AG04450 (cell line): ENCODE measurements at regions of chr5 and their contacts with region 1.

Region 1: GRCh38 chr5:17276445-17276844 is 59.0 kb downstream of the BASP1 start:
- DNase-seq: no peak
- H3K4me3 ChIP-seq: no peak overlapping the region
- H3K27ac ChIP-seq: no peak overlapping the region
- H3K27me3 ChIP-seq: no peaks in the 10 kb centered on the region
- CTCF ChIP-seq: no peak

Region 2: DNA sequence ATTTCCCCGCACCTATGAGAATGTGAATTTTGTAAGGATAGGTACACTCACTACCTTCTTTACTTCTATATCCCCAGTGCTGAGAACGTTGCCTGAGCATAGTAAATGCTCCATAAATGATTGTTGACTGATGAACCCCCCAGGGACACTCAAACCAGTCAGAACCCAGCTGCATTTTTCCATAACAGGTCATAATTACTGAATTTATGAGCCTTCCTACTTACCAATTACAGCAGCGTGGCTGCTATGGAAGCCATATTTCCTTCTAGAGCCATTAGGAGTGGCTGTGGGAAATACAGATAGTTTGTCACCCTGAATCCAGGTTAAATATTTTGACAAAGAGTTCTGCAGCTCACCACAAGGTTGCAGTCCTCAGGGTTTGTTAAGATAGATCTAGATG is 492.8 kb after region 1 on chr5:
- CTCF ChIA-PET with region 1: interaction called, 10 read pairs
- POLR2A ChIA-PET with region 1: no interaction called
- DNase-seq: no peak
- H3K4me3 ChIP-seq: no peak overlapping the region
- H3K27ac ChIP-seq: no peak overlapping the region
- H3K27me3 ChIP-seq: no peaks in the 10 kb centered on the region
- CTCF ChIP-seq: no peak